Activated CD4-positive, alpha-beta memory T cell treated with anti-CD3 and anti-CD28 coated beads for 36 hours (primary cell): ENCODE measurements at regions of chr6 and their contacts with region 1.

Region 1: GRCh38 chr6:13574149-13574570 is 241 bp upstream of the SIRT5 start:
- DNase-seq: peak; percentile 94
- H3K4me3 Mint-ChIP-seq: peak overlapping the region; percentile 98
- H3K27ac Mint-ChIP-seq: peak overlapping the region; percentile 100
- H3K4me1 Mint-ChIP-seq: peaks cover 13% of the 10 kb centered on the region
- H3K27me3 Mint-ChIP-seq: no peaks in the 10 kb centered on the region

Region 2: GRCh38 chr6:13336553-13336952 is 237.6 kb before region 1 on chr6:
- CTCF ChIA-PET with region 1: interaction called, 54 read pairs
- POLR2A ChIA-PET with region 1: no interaction called
- intact Hi-C with region 1: loop called (anchors 1 kb)
- DNase-seq: peak; percentile 79
- H3K4me3 Mint-ChIP-seq: no peak overlapping the region
- H3K27ac Mint-ChIP-seq: no peak overlapping the region
- H3K4me1 Mint-ChIP-seq: peaks cover 6% of the 10 kb centered on the region
- H3K27me3 Mint-ChIP-seq: no peaks in the 10 kb centered on the region

Region 3: DNA sequence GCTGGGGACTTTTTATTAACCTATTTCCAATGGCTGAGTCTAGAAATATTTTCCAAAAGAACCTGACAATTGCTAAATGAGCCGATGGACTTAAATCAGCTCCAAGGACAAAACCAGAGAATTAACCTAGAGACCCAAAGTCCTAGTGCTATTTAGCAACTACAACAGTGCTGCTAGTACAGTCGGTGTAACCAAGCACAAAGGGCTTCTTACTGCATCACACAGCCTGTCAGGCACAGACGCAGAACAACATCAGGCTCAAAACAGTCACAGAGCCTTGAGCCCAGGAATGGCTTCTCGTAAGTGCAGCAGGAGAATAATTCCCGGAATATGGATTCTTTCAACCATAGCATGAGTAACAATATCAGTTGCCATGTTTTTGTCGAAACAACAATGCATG is 156.7 kb before region 1 on chr6:
- CTCF ChIA-PET with region 1: no interaction called
- POLR2A ChIA-PET with region 1: no interaction called
- intact Hi-C with region 1: no loop called
- DNase-seq: no peak
- H3K4me3 Mint-ChIP-seq: no peak overlapping the region
- H3K27ac Mint-ChIP-seq: no peak overlapping the region
- H3K4me1 Mint-ChIP-seq: peaks cover 6% of the 10 kb centered on the region
- H3K27me3 Mint-ChIP-seq: no peaks in the 10 kb centered on the region

Region 4: DNA sequence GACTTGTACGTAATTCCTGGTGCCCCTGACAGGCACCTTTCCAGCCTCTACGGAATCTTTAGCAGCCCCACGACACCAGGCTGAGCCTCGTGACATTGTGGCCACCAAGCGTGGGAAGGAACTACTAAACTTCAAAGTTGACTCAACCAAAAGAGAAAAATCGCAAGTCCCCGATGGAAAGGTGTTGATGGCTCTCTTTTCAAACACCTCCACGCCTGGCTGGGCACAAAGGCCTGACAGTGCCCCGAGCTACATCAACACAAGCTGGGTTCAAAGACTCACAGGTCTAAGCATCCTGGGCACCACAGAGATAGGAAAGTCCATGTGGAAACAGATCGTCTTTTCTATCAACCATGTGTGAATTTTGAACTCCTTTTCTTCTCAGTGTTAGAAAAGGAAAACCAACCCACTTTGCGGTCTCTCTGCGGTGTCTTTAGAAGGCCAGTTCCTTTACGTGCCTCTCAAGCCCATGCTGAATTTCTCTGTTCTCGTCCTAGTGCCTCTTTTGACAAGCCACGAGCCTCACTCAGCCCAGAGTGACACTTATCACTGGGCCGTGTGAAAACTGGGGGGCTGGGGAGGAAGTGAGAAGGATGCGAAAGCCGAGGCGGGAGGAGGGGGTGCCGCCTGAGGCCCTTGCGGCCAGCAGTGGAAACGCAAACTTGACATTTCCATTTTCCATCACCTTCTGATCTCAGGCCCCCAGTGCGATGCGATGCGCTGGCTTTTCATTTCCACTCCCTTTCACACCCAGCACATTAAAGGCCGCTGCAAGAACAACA is 146.2 kb before region 1 on chr6:
- CTCF ChIA-PET with region 1: interaction called, 12 read pairs
- POLR2A ChIA-PET with region 1: interaction called, 13 read pairs
- intact Hi-C with region 1: loop called (anchors 1 kb)
- DNase-seq: peak; percentile 88
- H3K4me3 Mint-ChIP-seq: peak overlapping the region; percentile 53
- H3K27ac Mint-ChIP-seq: peak overlapping the region; percentile 86
- H3K4me1 Mint-ChIP-seq: peaks cover 66% of the 10 kb centered on the region
- H3K27me3 Mint-ChIP-seq: no peaks in the 10 kb centered on the region

Region 5: GRCh38 chr6:13538084-13538483 is 36.1 kb before region 1 on chr6:
- CTCF ChIA-PET with region 1: interaction called, 10 read pairs
- POLR2A ChIA-PET with region 1: no interaction called
- intact Hi-C with region 1: no loop called
- DNase-seq: no peak
- H3K4me3 Mint-ChIP-seq: no peak overlapping the region
- H3K27ac Mint-ChIP-seq: no peak overlapping the region
- H3K4me1 Mint-ChIP-seq: no peaks in the 10 kb centered on the region
- H3K27me3 Mint-ChIP-seq: no peaks in the 10 kb centered on the region

Region 6: DNA sequence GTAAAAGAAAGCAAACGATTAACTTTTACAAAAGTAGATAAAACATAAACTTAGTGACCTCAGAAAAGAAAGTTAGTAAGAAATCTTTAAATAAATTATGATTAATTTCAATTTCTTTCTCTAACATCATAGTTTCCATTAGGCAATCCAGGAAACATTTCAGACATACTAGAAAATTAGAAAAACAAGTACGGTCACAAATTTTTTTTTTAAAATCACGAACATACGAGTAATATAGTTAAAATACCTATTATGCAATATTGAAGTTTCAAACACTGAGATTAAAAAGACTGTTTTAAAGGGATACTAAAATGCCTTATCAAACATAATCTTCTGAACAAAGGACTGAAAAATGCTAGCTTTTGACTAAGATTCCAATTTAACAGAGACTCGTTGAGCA is 67.2 kb after region 1 on chr6:
- CTCF ChIA-PET with region 1: no interaction called
- POLR2A ChIA-PET with region 1: no interaction called
- intact Hi-C with region 1: no loop called
- DNase-seq: no peak
- H3K4me3 Mint-ChIP-seq: no peak overlapping the region
- H3K27ac Mint-ChIP-seq: peak overlapping the region; percentile 76
- H3K4me1 Mint-ChIP-seq: peaks cover 36% of the 10 kb centered on the region
- H3K27me3 Mint-ChIP-seq: no peaks in the 10 kb centered on the region

Region 7: DNA sequence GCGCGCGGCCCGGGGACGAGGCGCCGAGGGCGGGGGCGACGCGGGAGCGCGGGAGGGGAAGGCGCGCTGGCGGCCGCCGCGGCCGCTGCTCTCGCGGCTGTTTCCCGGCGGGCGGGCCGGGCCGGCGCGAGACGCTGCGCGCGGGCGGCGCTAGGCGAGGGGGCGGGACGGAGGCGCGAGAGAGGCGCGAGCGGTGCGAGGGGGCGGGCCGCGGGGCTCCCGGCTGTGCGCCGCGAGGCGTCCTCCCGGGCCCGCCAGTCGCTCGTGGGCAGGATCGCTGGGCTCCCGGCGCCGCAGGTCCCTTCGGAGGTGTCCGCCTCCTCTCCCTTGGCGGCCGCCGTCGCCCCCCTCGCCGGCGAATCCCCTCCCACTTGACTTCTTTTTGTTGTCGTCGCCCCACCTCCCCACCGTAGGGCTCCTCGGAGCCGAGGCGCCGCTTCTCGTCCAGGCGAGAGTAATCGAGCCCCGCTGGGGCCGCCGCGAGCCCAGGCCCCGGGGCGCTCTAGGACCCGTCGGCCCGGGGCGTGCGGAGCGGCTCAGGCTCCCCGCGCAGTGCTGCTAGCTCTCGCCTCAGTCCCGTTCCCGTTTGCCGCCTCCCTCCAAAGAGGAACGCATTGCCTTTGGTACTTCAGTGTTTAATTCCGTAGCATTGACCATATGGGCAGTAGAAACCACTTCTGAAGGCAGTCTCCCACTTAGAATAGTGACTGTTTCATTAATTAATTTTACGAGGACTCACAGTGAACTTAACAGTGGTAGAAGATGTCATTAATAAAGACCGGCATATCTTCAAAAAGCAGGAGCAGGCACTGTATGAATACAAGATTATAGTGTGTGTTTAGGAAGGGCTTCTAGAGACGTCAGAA is 137.8 kb after region 1 on chr6 and contains the start of gene RANBP9:
- CTCF ChIA-PET with region 1: interaction called, 7 read pairs
- POLR2A ChIA-PET with region 1: interaction called, 5 read pairs
- intact Hi-C with region 1: loop called (anchors 1 kb)
- DNase-seq: peak; percentile 90
- H3K4me3 Mint-ChIP-seq: peak within 1 kb of the TSS; percentile 89
- H3K27ac Mint-ChIP-seq: peak within 1 kb of the TSS; percentile 99
- H3K4me1 Mint-ChIP-seq: peaks cover 52% of the 10 kb centered on the region
- H3K27me3 Mint-ChIP-seq: no peaks in the 10 kb centered on the region
- total RNA-seq, gene RANBP9: 63.7 to 66.2 TPM

Region 8: GRCh38 chr6:15287670-15288375 is 1713.7 kb after region 1 on chr6:
- CTCF ChIA-PET with region 1: no interaction called
- POLR2A ChIA-PET with region 1: no interaction called
- intact Hi-C with region 1: no loop called
- DNase-seq: no peak
- H3K4me3 Mint-ChIP-seq: no peak overlapping the region
- H3K27ac Mint-ChIP-seq: no peak overlapping the region
- H3K4me1 Mint-ChIP-seq: peaks cover 51% of the 10 kb centered on the region
- H3K27me3 Mint-ChIP-seq: no peaks in the 10 kb centered on the region